ENCODE measurements at regions of chr5 and their contacts with region 1.

Region 1: DNA sequence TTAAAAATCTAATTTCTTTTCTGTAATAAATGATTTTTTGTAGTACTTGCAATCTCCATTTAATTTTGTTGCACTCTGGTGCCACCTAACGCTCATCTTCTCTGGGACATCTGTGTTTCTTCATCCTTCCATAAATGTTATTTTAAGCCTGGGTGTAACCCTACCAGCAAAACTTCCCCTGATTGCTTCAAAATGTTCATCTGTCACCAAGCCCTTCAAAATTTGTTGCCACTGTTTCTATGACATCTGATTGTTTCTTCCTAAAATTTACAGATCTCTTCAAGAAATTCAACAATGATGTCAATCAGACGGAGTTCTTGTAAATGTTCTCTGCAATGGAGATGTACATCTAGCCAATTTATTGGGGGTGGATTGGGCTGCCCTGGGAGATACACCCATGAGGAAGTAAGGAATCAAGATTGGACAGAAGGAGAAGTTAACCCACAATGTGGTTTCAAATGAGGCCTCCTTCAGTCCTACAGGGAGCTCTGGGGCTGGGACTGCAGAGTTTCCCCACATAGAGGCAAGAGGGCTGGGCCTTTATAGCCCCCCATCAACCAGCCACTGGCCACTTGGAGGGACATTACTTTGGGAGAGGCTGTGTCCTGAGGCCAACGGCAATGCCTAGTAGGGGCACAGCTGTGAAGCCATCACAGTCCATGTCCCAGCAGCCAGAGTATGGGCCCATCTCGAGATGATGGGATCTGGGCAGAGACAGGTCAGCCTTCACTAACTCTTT is 23.3 kb downstream of the MCTP1 start:
- DNase-seq: peak in 1 of 2 donors; percentile 8
- H3K4me3 ChIP-seq: no peak overlapping the region
- H3K27ac ChIP-seq: no peak overlapping the region
- H3K4me1 ChIP-seq: no peaks in the 10 kb centered on the region
- H3K27me3 ChIP-seq: no peaks in the 10 kb centered on the region
- CTCF ChIP-seq: peak in 2 of 6 experiments; percentile 19 to 35
- POLR2A ChIP-seq: no peak

Region 2: DNA sequence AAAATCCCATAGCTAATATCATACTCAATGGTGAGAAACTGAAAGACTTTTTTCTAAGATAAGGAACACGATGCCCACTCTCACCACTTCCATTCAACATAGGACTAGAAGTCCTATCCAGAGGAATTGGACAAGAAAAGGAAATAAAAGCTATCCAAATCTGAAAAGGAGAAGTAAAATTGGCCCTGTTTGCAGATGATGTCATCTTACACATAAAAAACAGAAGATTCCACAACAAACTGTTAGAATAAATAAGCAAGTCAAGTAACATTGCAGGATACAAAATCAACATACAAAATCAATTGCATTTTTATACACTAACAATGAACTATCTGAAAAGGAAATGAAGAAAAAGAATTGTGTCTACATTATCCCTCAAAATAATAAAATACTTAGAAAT is 284.8 kb before region 1 on chr5:
- intact Hi-C with region 1: loop called (anchors 10 kb)
- DNase-seq: no peak
- H3K4me3 ChIP-seq: no peak overlapping the region
- H3K27ac ChIP-seq: no peak overlapping the region
- H3K4me1 ChIP-seq: no peaks in the 10 kb centered on the region
- H3K27me3 ChIP-seq: no peaks in the 10 kb centered on the region
- CTCF ChIP-seq: no peak
- POLR2A ChIP-seq: no peak

Region 3: DNA sequence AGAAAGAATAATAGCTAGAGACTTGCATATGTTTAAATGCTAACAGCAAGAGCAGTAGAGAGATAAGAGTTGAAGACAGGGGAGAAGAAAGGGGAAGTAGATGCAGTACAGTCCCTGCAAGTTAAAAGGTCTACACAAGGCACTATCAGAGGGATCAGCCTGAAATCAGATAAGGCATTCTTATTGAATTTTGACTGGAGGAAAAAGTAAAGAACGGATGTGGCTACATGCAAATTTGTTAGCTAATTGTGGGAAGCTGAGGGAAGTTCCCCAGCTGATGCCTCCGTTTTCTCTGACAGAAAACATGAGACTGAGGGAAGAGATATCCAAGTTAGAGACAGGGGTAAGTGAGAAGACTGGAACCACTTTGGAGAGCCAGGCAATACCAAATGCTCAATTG is 456.6 kb after region 1 on chr5:
- intact Hi-C with region 1: no loop called
- DNase-seq: no peak
- H3K4me3 ChIP-seq: no peak overlapping the region
- H3K27ac ChIP-seq: no peak overlapping the region
- H3K4me1 ChIP-seq: peaks cover 0 to 16% of the 10 kb centered on the region in 2 donors
- H3K27me3 ChIP-seq: no peaks in the 10 kb centered on the region
- CTCF ChIP-seq: no peak
- POLR2A ChIP-seq: no peak

Measured in thyroid gland (tissue), 4 donors.